ENCODE measurements at regions of chr9 and their contacts with region 1.

Region 1: GRCh38 chr9:117464941-117465616 is 50.2 kb upstream of the ASTN2 start:
- DNase-seq: no peak
- ATAC-seq: no peak
- H3K4me3 Mint-ChIP-seq: no peak overlapping the region
- H3K27ac Mint-ChIP-seq: no peak overlapping the region
- H3K4me1 Mint-ChIP-seq: no peaks in the 10 kb centered on the region
- H3K27me3 Mint-ChIP-seq: peaks cover 3% of the 10 kb centered on the region

Region 2: DNA sequence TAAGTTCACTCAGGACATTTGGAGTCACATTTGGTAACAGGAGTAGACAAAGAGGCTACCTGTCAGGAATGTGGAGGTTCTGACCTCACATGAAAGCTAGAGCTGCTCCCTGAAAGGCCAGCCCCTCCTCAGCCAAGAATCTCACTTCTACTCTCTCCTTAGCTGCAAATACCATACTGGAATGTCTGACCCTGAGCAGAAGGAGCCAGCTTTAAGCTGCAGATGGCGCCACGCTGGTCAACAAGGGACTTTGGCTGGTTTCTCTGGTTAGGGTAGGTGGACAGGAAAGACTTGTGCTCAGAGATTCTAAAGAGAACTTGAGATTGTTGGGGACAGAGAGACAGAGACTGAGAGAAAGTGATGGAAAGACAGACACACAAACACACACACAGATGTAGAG is 72.1 kb before region 1 on chr9:
- CTCF ChIA-PET with region 1: no interaction called
- POLR2A ChIA-PET with region 1: no interaction called
- intact Hi-C with region 1: loop called in 1 of 2 experiments (anchors 2 kb)
- DNase-seq: no peak
- ATAC-seq: no peak
- H3K4me3 Mint-ChIP-seq: no peak overlapping the region
- H3K27ac Mint-ChIP-seq: no peak overlapping the region
- H3K4me1 Mint-ChIP-seq: no peaks in the 10 kb centered on the region
- H3K27me3 Mint-ChIP-seq: no peaks in the 10 kb centered on the region

Region 3: GRCh38 chr9:117782931-117783788 is 318.1 kb after region 1 on chr9:
- CTCF ChIA-PET with region 1: no interaction called
- POLR2A ChIA-PET with region 1: no interaction called
- intact Hi-C with region 1: no loop called
- DNase-seq: peak; percentile 73
- ATAC-seq: peak; percentile 85
- H3K4me3 Mint-ChIP-seq: no peak overlapping the region
- H3K27ac Mint-ChIP-seq: no peak overlapping the region
- H3K4me1 Mint-ChIP-seq: peaks cover 2% of the 10 kb centered on the region
- H3K27me3 Mint-ChIP-seq: peaks cover 4% of the 10 kb centered on the region

Region 4: DNA sequence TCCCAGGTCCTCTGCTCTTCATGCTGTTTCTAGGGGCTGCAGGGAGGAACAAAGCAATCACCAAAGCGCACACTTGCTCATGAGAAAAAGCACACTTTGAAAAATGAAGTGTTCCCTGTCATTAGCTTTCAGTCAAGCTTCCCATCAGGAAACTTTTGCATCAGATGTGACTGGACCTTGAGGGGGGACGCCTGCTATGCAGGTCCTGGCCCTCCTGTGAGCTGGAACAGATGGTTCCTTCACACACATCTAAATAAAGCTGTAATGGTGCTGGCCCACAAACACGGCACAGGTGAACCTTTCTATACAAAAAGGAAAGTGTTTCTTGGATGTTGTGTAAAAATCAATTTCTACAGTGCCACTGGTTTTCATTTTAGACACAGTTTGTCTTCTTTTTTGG is 505.2 kb after region 1 on chr9:
- CTCF ChIA-PET with region 1: no interaction called
- POLR2A ChIA-PET with region 1: no interaction called
- intact Hi-C with region 1: no loop called
- DNase-seq: no peak
- ATAC-seq: no peak
- H3K4me3 Mint-ChIP-seq: no peak overlapping the region
- H3K27ac Mint-ChIP-seq: no peak overlapping the region
- H3K4me1 Mint-ChIP-seq: no peaks in the 10 kb centered on the region
- H3K27me3 Mint-ChIP-seq: peaks cover 4% of the 10 kb centered on the region

Measured in activated CD4-positive, alpha-beta T cell treated with anti-CD3 and anti-CD28 coated beads for 36 hours (primary cell).